Posterior vena cava (tissue), 2 donors: ENCODE measurements at regions of chr2 and their contacts with region 1.

Region 1: DNA sequence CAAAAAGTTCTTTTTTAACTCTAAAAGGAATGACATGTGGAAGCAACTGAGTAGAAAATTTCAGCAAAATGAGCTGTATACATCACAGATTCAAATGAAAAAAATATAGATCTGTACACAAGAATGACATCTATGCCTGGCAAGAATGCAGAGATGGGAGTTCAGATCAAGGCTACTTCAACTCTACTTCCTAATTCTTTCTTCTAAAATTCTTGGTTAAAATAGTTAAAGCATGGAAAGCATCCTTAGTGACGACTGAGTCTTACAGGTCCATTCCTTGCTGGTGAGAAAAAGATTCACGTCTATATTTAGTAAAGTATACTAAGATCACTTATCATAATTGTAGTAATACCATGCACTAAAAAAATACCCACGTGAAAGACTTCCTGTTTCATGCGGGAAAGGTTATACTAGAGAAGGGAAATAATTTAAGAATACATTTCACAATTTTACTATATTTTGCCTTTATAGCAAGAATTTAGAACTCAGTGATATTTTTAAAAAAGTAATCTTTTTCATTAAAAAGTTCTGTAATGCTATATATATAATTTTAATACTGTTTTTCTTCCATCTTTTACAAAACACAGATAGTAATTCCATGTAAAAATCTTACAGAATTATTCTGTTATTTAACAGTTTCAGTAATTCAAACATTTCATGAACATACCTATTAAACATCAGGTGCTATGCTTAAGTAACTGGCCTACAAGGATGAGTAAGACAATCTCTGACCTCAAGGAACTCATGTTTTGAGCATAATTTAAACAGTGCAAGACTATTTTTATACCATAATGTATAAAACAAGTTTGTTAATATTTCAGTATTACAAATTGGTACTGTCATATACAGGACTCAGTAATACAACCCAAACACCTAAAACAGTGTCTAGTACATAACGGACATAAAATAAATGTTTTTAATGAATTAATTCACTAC is 159.6 kb downstream of the BAZ2B start:
- DNase-seq: no peak

Region 2: GRCh38 chr2:159297042-159297695 is 159.6 kb before region 1 on chr2:
- intact Hi-C with region 1: no loop called
- DNase-seq: no peak

Region 3: GRCh38 chr2:159427048-159427447 is 29.7 kb before region 1 on chr2:
- intact Hi-C with region 1: no loop called
- DNase-seq: no peak

Region 4: GRCh38 chr2:159439421-159439820 is 17.3 kb before region 1 on chr2:
- intact Hi-C with region 1: loop called (anchors 1 kb)
- DNase-seq: no peak

Region 5: DNA sequence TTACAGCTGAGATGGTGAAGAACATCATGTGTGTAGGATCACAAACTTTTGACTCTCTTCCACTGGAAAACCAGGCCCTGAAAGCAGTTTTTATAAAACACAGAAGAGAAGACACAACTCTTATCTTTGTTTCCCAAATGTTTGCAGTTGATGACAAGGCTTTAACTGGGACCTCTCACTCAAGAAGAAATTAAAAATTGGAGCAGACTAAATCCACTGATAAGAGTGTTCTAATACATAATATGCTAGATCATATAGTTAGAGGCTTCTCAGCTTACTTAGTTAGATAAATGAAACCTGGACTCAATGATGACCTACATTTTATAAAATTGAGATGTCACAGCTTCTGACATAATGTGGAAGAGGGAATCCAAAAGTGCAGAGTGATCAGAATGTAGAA is 12.0 kb before region 1 on chr2:
- intact Hi-C with region 1: loop called in 1 of 2 experiments (anchors 1 kb)
- DNase-seq: no peak

Region 6: GRCh38 chr2:159817283-159817682 is 360.5 kb after region 1 on chr2:
- intact Hi-C with region 1: no loop called
- DNase-seq: no peak